Right ventricle myocardium inferior (tissue), 1 donor: ENCODE measurements at regions of chr3 and their contacts with region 1.

Region 1: DNA sequence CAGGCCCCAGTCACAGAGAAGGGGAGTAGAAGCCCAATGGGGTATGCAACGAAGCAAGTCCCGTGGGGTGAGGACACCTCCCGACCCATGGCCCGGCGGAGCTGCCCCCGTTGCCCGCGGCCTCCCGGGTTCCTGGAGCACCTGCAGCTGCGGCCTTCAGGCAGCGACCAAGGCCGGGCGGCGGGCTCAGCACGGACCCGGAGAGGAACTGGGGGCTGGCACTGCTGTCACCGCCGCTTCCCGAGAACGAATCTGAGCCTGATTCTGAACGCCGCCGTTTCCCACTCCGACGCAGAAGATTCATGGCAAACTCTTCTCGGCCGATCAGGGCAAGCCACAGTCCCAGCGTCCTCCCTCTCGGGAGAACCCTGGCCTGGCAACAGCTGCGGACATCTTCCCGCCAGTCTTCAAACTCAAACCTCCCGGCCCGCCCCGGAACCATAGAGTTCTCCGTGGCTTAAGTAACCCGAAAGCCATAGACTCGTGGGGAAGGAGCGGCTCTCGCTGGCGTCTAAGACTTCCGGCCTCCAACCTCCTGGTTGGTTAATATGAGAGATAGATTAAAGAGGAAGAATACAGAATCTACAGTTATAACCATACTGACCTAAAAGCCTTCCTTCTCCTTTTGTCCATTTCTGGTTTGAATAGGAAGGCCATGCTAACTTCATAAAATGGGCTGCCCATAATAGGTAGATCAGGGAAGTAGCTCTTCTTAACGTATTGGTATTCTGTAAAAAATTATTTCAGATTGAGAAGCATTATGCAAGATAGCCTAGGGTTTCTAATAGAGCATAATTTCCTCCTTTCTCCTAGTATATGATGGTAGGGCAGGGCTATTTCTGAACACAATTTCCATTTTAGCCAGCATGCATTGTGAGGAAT is at the start of gene POLQ:
- DNase-seq: peak; percentile 95
- ATAC-seq: peak; percentile 99
- total RNA-seq, gene POLQ: 0.57 TPM

Region 2: DNA sequence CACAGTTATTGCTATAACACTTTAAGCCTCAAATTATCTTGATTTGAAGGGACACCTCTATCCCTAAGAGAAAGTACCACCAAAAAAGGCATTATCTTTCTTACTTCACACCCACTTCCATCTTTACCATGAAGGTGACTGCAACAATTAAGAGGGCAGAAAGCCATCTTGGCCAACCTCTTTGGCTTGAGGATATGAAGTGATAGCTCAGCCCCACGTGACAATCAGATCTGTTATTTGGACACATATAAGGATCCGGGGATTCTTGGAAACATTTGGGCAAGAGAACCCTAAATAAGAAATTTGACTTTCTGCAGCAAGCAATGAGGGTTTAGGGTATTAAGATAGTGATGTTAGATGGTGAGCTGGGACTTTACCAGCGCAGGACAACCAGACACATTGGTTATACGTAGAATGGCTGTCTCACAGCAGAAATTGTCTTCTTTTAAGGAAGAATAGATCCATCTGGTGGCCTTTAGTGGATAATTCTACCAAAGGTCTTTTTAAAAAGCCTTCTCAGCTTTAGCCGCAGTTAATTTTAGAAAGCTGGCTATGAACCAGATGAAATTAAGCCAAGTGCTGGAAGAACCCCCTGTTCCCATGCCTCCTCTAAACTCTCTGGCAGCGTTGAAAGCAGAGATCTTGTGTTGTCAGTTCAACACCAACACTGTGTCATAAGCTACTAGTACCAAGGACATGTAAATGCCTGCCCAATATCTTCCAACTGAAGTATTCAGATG is 102.6 kb after region 1 on chr3:
- intact Hi-C with region 1: loop called (anchors 2 kb)
- DNase-seq: no peak
- ATAC-seq: peak; percentile 98

Region 3: DNA sequence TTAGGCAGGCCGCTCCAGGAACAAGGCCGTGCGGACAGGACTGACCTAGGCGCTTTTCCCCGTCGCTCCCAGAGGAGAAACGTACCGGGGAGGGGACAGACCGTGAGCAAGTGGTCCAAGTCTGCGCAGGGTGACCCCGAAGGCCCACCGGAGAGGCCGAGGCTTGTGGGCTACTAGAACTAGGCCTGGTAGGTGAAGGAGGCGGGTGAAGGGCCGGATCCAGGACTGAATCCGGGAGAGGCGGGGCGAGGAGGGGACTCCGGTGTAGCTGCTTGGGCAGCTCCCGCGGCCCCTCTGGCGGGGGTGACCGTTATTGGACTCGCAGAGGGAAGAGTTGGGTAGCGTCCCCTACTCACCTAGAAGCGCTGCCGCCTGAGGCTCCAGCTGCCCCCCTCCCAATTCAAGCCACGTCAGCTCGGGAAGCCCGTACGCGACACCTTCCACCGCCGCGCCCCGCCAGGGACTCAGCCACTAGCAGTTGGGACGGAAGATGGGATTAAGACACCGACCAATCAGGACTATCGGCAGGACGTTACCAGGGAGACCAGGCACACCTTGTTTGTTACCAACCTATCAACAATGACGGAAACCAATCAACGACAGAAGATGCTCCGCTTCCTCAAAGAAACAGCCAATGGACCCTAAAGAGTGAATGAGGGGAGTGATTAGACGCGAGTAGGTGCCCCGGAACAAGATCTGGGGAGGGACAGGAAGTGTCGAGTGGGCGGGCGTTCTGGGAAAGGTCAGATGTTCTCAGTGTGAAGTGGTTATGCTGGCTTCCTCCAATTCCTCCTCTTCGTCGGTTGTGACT is 203.7 kb after region 1 on chr3 and contains the start of gene GOLGB1:
- intact Hi-C with region 1: loop called (anchors 10 kb)
- DNase-seq: peak; percentile 95
- ATAC-seq: peak; percentile 97
- total RNA-seq, gene GOLGB1: 47.5 TPM

Region 4: DNA sequence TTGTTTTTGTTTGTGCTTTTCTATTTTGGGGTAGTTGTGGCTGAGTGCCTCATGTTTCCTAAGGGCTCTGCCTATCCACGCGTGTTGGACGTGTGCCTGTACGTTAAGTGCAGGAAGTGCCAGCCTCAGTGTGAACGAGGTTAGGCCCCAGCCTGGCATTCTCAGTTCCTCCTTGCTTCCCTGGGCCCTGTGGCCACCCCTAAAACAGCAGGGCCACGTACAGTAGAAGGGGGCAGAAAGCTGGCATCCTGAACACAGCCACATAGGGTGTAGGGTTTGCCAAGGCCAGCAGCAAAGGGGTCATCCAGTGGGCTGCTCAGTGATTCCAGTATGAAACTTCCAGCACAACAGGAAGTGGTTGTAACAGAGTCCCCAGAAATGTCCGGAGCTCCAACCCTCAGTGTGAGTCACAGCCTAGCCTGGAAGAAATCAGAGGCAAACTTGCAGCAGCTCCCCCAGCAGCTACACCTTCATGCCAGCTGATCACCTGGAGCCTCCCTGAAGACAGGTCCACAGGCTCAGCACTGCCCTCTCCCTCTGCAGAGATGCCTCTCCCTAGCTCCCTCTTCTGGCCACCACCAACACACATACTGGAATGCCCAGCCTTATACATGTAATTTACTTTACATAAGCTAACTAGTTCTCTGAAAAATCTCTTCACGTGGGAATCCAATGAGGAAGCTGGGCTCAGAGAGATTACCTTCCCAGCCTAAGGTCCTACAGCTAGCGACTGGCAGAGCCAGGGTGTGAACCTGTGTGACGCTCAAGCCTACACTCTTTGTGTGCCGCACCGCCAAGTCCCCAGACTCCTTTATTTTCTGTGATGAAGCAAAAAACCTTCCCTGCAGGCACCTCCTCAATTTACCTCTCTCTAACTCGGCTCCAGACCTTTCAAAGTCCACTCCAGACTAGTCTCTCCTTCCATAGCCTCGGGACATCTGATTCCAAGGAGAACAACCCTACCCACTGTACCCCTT is 449.6 kb after region 1 on chr3:
- intact Hi-C with region 1: loop called (anchors 5 kb)
- DNase-seq: peak; percentile 71
- ATAC-seq: peak; percentile 64

Region 5: GRCh38 chr3:123028233-123028828 is 1482.5 kb after region 1 on chr3:
- intact Hi-C with region 1: loop called (anchors 10 kb)
- DNase-seq: no peak
- ATAC-seq: peak; percentile 64